ENCODE measurements at regions of chr13 and their contacts with region 1.

Region 1: GRCh38 chr13:49585220-49586157 is at the start of gene RCBTB1:
- DNase-seq: peak; percentile 56
- H3K4me3 Mint-ChIP-seq: peak within 1 kb of the TSS; percentile 88
- H3K27ac Mint-ChIP-seq: peak within 1 kb of the TSS; percentile 61
- H3K4me1 Mint-ChIP-seq: peaks cover 25% of the 10 kb centered on the region
- H3K27me3 Mint-ChIP-seq: no peaks in the 10 kb centered on the region
- total RNA-seq, gene RCBTB1: 17.8 to 19.2 TPM

Region 2: DNA sequence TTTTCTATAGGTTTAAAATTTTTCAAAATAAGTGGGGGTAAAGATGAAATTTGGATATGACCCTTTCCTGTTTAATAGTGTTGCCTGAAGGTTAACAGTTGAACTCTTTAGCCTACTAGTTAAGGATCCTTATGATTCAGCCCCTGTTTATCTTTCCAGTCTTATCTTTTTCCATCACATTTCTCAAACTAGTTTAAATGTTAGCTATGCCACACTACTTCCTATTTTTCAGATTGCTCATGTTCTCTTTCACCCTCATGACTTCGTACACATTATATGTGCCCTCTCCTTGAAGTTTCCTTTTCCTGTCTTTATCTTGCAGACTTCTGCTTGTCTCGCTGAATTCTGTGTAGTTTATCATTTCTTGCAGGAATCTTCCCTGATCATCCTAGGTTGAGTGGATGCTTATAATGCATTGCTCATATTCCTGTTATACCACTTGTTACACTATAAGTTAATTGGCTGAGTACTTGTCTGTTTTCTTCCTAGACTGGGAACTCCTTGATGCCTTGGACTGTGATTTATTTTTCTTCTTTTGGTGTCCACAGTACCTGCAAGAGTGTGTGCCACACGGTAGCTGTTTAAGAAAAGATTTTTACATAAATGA is 523.1 kb before region 1 on chr13:
- CTCF ChIA-PET with region 1: no interaction called
- intact Hi-C with region 1: no loop called
- DNase-seq: no peak
- H3K4me3 Mint-ChIP-seq: no peak overlapping the region
- H3K27ac Mint-ChIP-seq: no peak overlapping the region
- H3K4me1 Mint-ChIP-seq: peaks cover 9% of the 10 kb centered on the region
- H3K27me3 Mint-ChIP-seq: no peaks in the 10 kb centered on the region

Region 3: GRCh38 chr13:49569956-49570689 is 15.4 kb before region 1 on chr13:
- CTCF ChIA-PET with region 1: interaction called, 4 read pairs
- intact Hi-C with region 1: loop called (anchors 1 kb)
- DNase-seq: peak; percentile 44
- H3K4me3 Mint-ChIP-seq: no peak overlapping the region
- H3K27ac Mint-ChIP-seq: peak overlapping the region; percentile 32
- H3K4me1 Mint-ChIP-seq: peaks cover 23% of the 10 kb centered on the region
- H3K27me3 Mint-ChIP-seq: no peaks in the 10 kb centered on the region

Region 4: DNA sequence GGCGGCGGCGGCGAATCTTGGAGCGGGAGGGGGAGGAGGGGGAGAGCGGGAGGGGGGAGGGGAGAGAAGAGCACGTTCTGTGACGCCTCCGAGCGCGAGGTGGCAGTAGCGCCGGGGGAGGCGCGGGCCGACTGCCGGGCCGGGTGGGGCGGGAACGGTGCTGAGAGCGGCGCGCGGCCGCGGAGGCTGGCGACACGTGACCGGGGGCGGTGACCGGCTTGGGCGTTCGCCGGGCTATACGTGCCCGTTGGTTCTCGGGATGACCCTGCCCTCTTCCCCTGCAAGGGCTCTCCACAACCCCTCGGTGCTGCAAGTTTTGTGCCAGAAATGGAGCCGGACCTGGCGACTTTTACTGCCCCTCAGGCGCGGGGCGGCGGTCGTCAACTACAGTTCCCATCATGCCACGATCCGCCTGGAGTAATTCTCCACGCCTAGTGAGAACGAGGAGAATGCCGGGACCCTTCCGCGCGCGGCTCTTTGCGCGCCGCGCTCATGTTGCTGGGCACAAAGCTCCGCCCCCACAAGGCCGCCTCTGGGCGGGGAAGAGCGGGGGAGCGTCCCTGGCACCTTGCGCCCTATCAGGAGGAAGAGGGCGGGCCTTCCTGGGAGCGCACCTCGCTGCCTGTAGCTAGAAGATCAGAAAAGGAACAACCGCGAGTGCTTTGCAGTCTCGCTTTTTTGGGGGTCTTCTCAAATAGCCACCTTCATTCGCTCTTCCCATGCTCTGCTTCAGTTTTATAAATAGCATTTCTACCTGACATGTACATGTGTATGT is 207.2 kb after region 1 on chr13 and contains the start of gene KPNA3:
- CTCF ChIA-PET with region 1: no interaction called
- intact Hi-C with region 1: loop called (anchors 2 kb)
- DNase-seq: peak; percentile 96
- H3K4me3 Mint-ChIP-seq: peak within 1 kb of the TSS; percentile 92
- H3K27ac Mint-ChIP-seq: peak within 1 kb of the TSS; percentile 94
- H3K4me1 Mint-ChIP-seq: peaks cover 29% of the 10 kb centered on the region
- H3K27me3 Mint-ChIP-seq: peaks cover 4% of the 10 kb centered on the region
- total RNA-seq, gene KPNA3: 47.9 to 50.7 TPM

Measured in activated naive CD4-positive, alpha-beta T cell treated with anti-CD3 and anti-CD28 coated beads for 36 hours (primary cell).